Left colon (tissue), 2 donors: ENCODE measurements at regions of chr21 and their contacts with region 1.

Region 1: GRCh38 chr21:17819877-17820229 is 697 bp upstream of the C21orf91 start:
- DNase-seq: no peak
- ATAC-seq: peak; percentile 50

Region 2: GRCh38 chr21:17542371-17543011 is 277.4 kb before region 1 on chr21:
- intact Hi-C with region 1: no loop called
- DNase-seq: no peak
- ATAC-seq: peak; percentile 56

Region 3: GRCh38 chr21:17622018-17622417 is 197.8 kb before region 1 on chr21:
- intact Hi-C with region 1: loop called in 1 of 2 experiments (anchors 10 kb)
- DNase-seq: no peak
- ATAC-seq: no peak

Region 4: GRCh38 chr21:18245464-18245967 is 425.7 kb after region 1 on chr21:
- intact Hi-C with region 1: no loop called
- DNase-seq: no peak
- ATAC-seq: no peak